Right cardiac atrium (tissue), 5 donors: ENCODE measurements at regions of chr9 and their contacts with region 1.

Region 1: GRCh38 chr9:6997330-6997729 is 239.6 kb downstream of the KDM4C start:
- DNase-seq: no peak
- ATAC-seq: no peak
- H3K4me3 ChIP-seq: no peak overlapping the region
- H3K27ac ChIP-seq: no peak overlapping the region
- H3K4me1 ChIP-seq: no peaks in the 10 kb centered on the region
- H3K27me3 ChIP-seq: no peaks in the 10 kb centered on the region

Region 2: GRCh38 chr9:6955251-6955921 is 41.9 kb before region 1 on chr9:
- intact Hi-C with region 1: loop called in 1 of 4 experiments (anchors 5 kb)
- DNase-seq: no peak
- ATAC-seq: peak; percentile 26 to 54
- H3K4me3 ChIP-seq: no peak overlapping the region
- H3K27ac ChIP-seq: no peak overlapping the region
- H3K4me1 ChIP-seq: peaks cover 6% of the 10 kb centered on the region
- H3K27me3 ChIP-seq: no peaks in the 10 kb centered on the region

Region 3: GRCh38 chr9:7095058-7095457 is 97.7 kb after region 1 on chr9:
- intact Hi-C with region 1: no loop called
- DNase-seq: no peak
- ATAC-seq: no peak
- H3K4me3 ChIP-seq: no peak overlapping the region
- H3K27ac ChIP-seq: no peak overlapping the region
- H3K4me1 ChIP-seq: peaks cover 4% of the 10 kb centered on the region
- H3K27me3 ChIP-seq: no peaks in the 10 kb centered on the region